Activated CD4-positive, alpha-beta T cell treated with anti-CD3 and anti-CD28 coated beads, Interleukin-2, amount 10 ng/mL, durations not matched to agents 24 days and 14 days (primary cell): ENCODE measurements at regions of chr13 and their contacts with region 1.

Region 1: GRCh38 chr13:41456768-41457588 is at the start of gene RGCC:
- DNase-seq: peak; percentile 97
- H3K4me3 Mint-ChIP-seq: peak within 1 kb of the TSS; percentile 93
- H3K27ac Mint-ChIP-seq: peak within 1 kb of the TSS; percentile 97
- H3K4me1 Mint-ChIP-seq: peaks cover 41% of the 10 kb centered on the region
- H3K27me3 Mint-ChIP-seq: peaks cover 26% of the 10 kb centered on the region
- total RNA-seq, gene RGCC: 113 and 117 TPM in 2 replicates

Region 2: GRCh38 chr13:41352935-41353840 is 103.8 kb before region 1 on chr13:
- intact Hi-C with region 1: loop called (anchors 2 kb)
- DNase-seq: peak; percentile 89
- H3K4me3 Mint-ChIP-seq: no peak overlapping the region
- H3K27ac Mint-ChIP-seq: peak overlapping the region; percentile 81
- H3K4me1 Mint-ChIP-seq: peaks cover 34% of the 10 kb centered on the region
- H3K27me3 Mint-ChIP-seq: no peaks in the 10 kb centered on the region

Region 3: GRCh38 chr13:41416276-41416675 is 40.7 kb before region 1 on chr13:
- intact Hi-C with region 1: no loop called
- DNase-seq: no peak
- H3K4me3 Mint-ChIP-seq: no peak overlapping the region
- H3K27ac Mint-ChIP-seq: no peak overlapping the region
- H3K4me1 Mint-ChIP-seq: no peaks in the 10 kb centered on the region
- H3K27me3 Mint-ChIP-seq: peaks cover 5% of the 10 kb centered on the region

Region 4: DNA sequence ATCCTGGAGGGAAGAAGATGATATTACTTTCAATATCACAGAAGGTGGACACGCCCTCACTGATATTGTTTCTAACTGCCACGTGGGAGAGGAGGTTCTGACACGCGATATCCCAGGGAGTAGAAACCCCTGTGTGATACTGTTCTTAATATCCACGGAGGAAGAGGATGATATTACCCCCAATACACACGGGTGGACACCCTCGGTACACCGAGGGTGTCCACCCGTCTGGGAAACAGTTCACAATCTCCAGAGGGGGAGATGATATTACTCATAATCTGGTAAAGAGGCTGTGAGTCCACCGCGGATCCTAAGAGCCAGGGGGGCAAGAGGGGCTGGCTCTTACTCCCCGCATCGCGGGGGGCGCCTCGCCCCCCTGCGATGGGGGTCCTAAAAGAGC is 29.3 kb before region 1 on chr13:
- intact Hi-C with region 1: loop called (anchors 2 kb)
- DNase-seq: no peak
- H3K4me3 Mint-ChIP-seq: peak overlapping the region; percentile 2
- H3K27ac Mint-ChIP-seq: no peak overlapping the region
- H3K4me1 Mint-ChIP-seq: peaks cover 4% of the 10 kb centered on the region
- H3K27me3 Mint-ChIP-seq: peaks cover 2% of the 10 kb centered on the region

Region 5: GRCh38 chr13:41492404-41493260 is 35.7 kb after region 1 on chr13:
- intact Hi-C with region 1: no loop called
- DNase-seq: peak; percentile 79
- H3K4me3 Mint-ChIP-seq: peak overlapping the region; percentile 73
- H3K27ac Mint-ChIP-seq: peak overlapping the region; percentile 93
- H3K4me1 Mint-ChIP-seq: peaks cover 62% of the 10 kb centered on the region
- H3K27me3 Mint-ChIP-seq: no peaks in the 10 kb centered on the region

Region 6: GRCh38 chr13:41652727-41653361 is 195.9 kb after region 1 on chr13:
- intact Hi-C with region 1: loop called (anchors 1 kb)
- DNase-seq: peak; percentile 78
- H3K4me3 Mint-ChIP-seq: no peak overlapping the region
- H3K27ac Mint-ChIP-seq: no peak overlapping the region
- H3K4me1 Mint-ChIP-seq: peaks cover 11% of the 10 kb centered on the region
- H3K27me3 Mint-ChIP-seq: no peaks in the 10 kb centered on the region

Region 7: GRCh38 chr13:41681587-41681986 is 224.6 kb after region 1 on chr13:
- intact Hi-C with region 1: no loop called
- DNase-seq: no peak
- H3K4me3 Mint-ChIP-seq: no peak overlapping the region
- H3K27ac Mint-ChIP-seq: no peak overlapping the region
- H3K4me1 Mint-ChIP-seq: no peaks in the 10 kb centered on the region
- H3K27me3 Mint-ChIP-seq: no peaks in the 10 kb centered on the region